ENCODE measurements at regions of chr5 and their contacts with region 1.

Region 1: DNA sequence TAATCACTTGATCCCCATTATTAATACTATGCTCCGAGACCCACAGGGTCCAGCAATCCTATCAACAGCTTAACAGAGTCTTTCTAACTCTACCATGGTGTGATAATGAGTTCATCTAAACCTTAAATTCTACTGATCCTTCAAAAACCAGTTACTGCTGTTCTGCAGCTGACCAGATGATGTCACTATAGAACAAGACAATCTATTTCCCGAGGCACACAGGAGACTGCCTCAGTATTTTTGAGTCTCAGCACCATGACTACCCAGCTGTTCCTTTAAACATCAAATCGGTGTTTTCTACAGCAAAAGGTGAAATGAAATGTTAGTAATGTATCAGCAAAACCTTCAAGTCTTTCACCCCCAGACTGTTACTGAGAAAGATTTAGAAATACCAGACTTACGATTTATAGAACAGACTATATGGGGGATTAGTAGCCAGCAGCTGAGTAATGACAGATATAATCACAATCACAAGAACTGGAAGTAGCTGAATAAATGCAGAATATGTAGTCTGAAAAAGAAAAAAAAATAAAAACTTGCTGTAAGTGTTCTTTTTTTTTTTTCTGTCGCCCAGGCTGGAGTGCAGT is 16.9 kb downstream of the DNAJC18 start:
- DNase-seq: peak; percentile 76 to 81 (median 79)
- H3K4me3 ChIP-seq: no peak overlapping the region
- H3K4me3 Mint-ChIP-seq: no peak overlapping the region
- H3K27ac ChIP-seq: no peak overlapping the region
- H3K27ac Mint-ChIP-seq: peak overlapping the region in 6 of 7 donors; percentile 14 to 77 (median 50)
- H3K4me1 ChIP-seq: peaks cover 3% of the 10 kb centered on the region
- H3K4me1 Mint-ChIP-seq: peaks cover 5 to 6% (median 6%) of the 10 kb centered on the region in 4 donors
- H3K27me3 ChIP-seq: no peaks in the 10 kb centered on the region
- H3K27me3 Mint-ChIP-seq: no peaks in the 10 kb centered on the region

Region 2: GRCh38 chr5:139439013-139439903 is 16.9 kb after region 1 on chr5 and contains the start of gene DNAJC18:
- CTCF ChIA-PET with region 1: interaction called, 25 read pairs
- POLR2A ChIA-PET with region 1: interaction called, 8 read pairs
- intact Hi-C with region 1: no loop called
- DNase-seq: peak; percentile 84 to 90 (median 86)
- H3K4me3 ChIP-seq: peak within 1 kb of the TSS; percentile 83 to 91
- H3K4me3 Mint-ChIP-seq: peak within 1 kb of the TSS; percentile 96 to 99 (median 98)
- H3K27ac ChIP-seq: peak within 1 kb of the TSS; percentile 99
- H3K27ac Mint-ChIP-seq: peak within 1 kb of the TSS; percentile 93 to 100 (median 100)
- H3K4me1 ChIP-seq: peaks cover 31% of the 10 kb centered on the region
- H3K4me1 Mint-ChIP-seq: peaks cover 32 to 63% (median 41%) of the 10 kb centered on the region in 4 donors
- H3K27me3 ChIP-seq: no peaks in the 10 kb centered on the region
- H3K27me3 Mint-ChIP-seq: no peaks in the 10 kb centered on the region
- total RNA-seq, gene DNAJC18: 6.2 to 7.3 TPM

Region 3: GRCh38 chr5:139482050-139482889 is 59.9 kb after region 1 on chr5 and contains the start of gene STING1:
- CTCF ChIA-PET with region 1: interaction called, 97 read pairs
- POLR2A ChIA-PET with region 1: interaction called, 50 read pairs
- intact Hi-C with region 1: loop called (anchors 1 kb)
- DNase-seq: peak; percentile 78 to 83 (median 80)
- H3K4me3 ChIP-seq: peak within 1 kb of the TSS; percentile 82 to 95
- H3K4me3 Mint-ChIP-seq: peak within 1 kb of the TSS; percentile 92 to 98 (median 94)
- H3K27ac ChIP-seq: peak within 1 kb of the TSS; percentile 86
- H3K27ac Mint-ChIP-seq: peak within 1 kb of the TSS; percentile 90 to 98 (median 97)
- H3K4me1 ChIP-seq: peaks cover 46% of the 10 kb centered on the region
- H3K4me1 Mint-ChIP-seq: peaks cover 21 to 57% (median 39%) of the 10 kb centered on the region in 4 donors
- H3K27me3 ChIP-seq: no peaks in the 10 kb centered on the region
- H3K27me3 Mint-ChIP-seq: no peaks in the 10 kb centered on the region
- total RNA-seq, gene STING1: 141 to 144 TPM

Region 4: GRCh38 chr5:139574641-139575312 is 152.4 kb after region 1 on chr5:
- CTCF ChIA-PET with region 1: interaction called, 7 read pairs
- POLR2A ChIA-PET with region 1: no interaction called
- intact Hi-C with region 1: loop called (anchors 1 kb)
- DNase-seq: peak in 4 of 5 donors; percentile 37 to 45 (median 40)
- H3K4me3 ChIP-seq: no peak overlapping the region
- H3K4me3 Mint-ChIP-seq: peak overlapping the region in 6 of 8 donors; percentile 5 to 67 (median 44)
- H3K27ac ChIP-seq: peak overlapping the region; percentile 45
- H3K27ac Mint-ChIP-seq: peak overlapping the region; percentile 7 to 84 (median 64)
- H3K4me1 ChIP-seq: peaks cover 75% of the 10 kb centered on the region
- H3K4me1 Mint-ChIP-seq: peaks cover 54 to 78% (median 67%) of the 10 kb centered on the region in 4 donors
- H3K27me3 ChIP-seq: no peaks in the 10 kb centered on the region
- H3K27me3 Mint-ChIP-seq: no peaks in the 10 kb centered on the region

Region 5: DNA sequence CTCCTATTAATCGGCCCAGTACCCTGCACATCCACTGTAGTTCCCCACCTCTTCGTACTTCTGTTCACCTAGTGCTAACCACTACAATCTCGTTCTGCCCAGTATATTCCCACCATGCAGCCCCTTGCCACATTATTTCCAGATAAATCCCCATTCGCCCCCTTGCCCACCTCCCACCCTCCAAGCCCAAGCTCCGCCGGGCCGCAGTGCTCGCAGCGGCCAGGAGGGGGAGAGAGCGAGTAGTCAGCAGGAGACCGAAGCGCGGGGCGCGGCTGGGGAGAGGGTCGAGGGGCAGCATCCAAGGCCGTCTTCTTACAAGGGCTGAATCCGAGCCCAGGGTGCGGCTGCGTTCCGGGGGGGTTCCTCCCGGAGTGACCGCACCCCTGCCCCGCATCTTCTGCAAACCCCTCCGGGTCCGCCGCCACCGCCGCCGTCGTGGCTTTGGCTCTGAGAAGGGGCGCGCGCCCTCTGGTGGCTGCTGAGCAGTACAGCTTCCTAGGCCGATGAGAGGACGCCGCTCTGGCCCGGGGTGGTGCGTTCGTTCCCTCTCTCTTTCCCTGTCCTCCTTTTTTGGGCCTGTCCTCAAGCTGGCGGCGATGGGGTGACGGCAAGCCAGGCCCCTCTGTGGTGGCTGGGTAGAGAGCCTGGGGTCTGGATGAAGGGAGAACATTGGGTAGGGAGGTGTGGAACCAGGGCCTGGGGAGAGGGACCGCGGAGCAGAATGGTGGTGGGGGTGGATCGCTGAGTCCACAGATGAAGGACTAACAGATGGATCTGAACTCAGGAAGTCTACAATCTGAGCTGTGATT is 343.2 kb after region 1 on chr5:
- CTCF ChIA-PET with region 1: interaction called, 4 read pairs
- POLR2A ChIA-PET with region 1: no interaction called
- intact Hi-C with region 1: loop called (anchors 1 kb)
- DNase-seq: peak; percentile 78 to 87 (median 84)
- H3K4me3 ChIP-seq: peak overlapping the region; percentile 23 to 56
- H3K4me3 Mint-ChIP-seq: peak overlapping the region; percentile 25 to 72 (median 54)
- H3K27ac ChIP-seq: no peak overlapping the region
- H3K27ac Mint-ChIP-seq: peak overlapping the region in 5 of 7 donors; percentile 31 to 66 (median 52)
- H3K4me1 ChIP-seq: peaks cover 9% of the 10 kb centered on the region
- H3K4me1 Mint-ChIP-seq: peaks cover 5 to 8% (median 7%) of the 10 kb centered on the region in 4 donors
- H3K27me3 ChIP-seq: peaks cover 19% of the 10 kb centered on the region
- H3K27me3 Mint-ChIP-seq: peaks cover 19 to 33% of the 10 kb centered on the region in 2 donors

Measured in CD4-positive, alpha-beta memory T cell (primary cell).